Endothelial cell of umbilical vein (primary cell): ENCODE measurements at regions of chr2 and their contacts with region 1.

Region 1: DNA sequence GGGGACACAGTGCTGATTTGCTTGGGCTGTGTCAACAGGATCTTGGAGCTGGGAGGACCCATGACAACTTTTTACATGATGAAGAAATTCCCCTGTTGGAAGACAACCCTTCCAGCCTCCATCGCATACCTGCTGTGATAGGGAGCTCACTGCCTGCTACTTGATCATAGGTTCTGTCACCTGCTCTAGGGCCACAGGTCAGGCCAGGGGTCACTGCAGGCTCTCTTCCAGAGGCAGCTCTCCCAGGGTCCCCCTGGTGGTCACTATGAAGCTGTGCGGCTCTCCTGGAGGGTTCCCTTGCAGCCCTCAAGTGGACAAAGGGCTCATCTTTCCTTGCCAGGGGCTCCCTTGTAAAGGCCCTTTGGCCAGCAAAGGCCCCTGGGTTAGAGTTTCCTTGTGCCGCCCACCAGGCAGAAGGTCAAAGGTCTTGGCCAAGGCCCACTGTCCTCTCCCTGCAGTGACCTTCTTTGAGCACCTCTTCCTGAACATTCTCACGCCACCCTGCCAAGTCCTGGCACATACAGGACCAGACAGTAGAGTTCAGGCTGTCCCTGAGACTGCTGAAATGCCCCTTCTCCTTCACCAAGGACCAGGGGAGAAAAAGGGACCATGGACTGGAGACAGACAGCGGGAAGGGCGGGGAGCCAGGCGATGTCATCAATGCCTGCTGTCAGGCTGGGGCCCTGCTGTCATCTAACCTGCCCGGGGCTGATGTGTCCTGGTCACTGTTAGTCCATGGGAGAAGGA is 345.1 kb downstream of the DYSF start:
- DNase-seq: peak; percentile 39
- H3K4me3 ChIP-seq: no peak overlapping the region
- H3K27ac ChIP-seq: no peak overlapping the region
- H3K4me1 ChIP-seq: no peaks in the 10 kb centered on the region
- H3K27me3 ChIP-seq: peaks cover 4 to 6% of the 10 kb centered on the region in 2 experiments
- CTCF ChIP-seq: peak; percentile 78 to 88
- POLR2A ChIP-seq: no peak

Region 2: DNA sequence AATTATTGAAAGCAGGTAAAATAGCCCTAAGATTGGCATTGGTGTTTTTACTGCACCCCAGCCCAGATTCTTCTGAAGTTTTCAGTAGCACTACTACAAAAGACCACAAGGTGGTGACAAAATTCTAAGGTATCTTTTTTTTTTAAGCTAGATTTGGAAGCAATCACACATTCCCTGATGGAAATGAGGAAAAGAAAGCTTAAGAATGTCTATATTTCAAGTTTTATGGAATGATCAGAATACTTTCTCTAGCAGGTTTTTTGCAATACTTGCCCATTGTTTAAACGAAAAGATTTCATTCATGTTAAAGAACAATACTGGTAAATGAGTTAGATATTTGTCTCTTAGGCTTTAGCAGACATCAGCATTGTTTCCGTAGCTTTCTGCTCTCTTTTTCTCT is 498.9 kb before region 1 on chr2:
- CTCF ChIA-PET with region 1: interaction called, 34 read pairs
- POLR2A ChIA-PET with region 1: no interaction called
- dilution Hi-C with region 1: no loop called
- intact Hi-C with region 1: loop called (anchors 2 kb)
- DNase-seq: peak; percentile 63
- H3K4me3 ChIP-seq: no peak overlapping the region
- H3K27ac ChIP-seq: no peak overlapping the region
- H3K4me1 ChIP-seq: no peaks in the 10 kb centered on the region
- H3K27me3 ChIP-seq: no peaks in the 10 kb centered on the region
- CTCF ChIP-seq: peak; percentile 31 to 38
- POLR2A ChIP-seq: no peak

Region 3: GRCh38 chr2:71609958-71610357 is 188.5 kb before region 1 on chr2:
- CTCF ChIA-PET with region 1: interaction called, 52 read pairs
- POLR2A ChIA-PET with region 1: no interaction called
- dilution Hi-C with region 1: no loop called
- intact Hi-C with region 1: loop called (anchors 1 kb)
- DNase-seq: peak; percentile 42
- H3K4me3 ChIP-seq: no peak overlapping the region
- H3K27ac ChIP-seq: peak overlapping the region; percentile 59
- H3K4me1 ChIP-seq: peaks cover 32% of the 10 kb centered on the region
- H3K27me3 ChIP-seq: no peaks in the 10 kb centered on the region
- CTCF ChIP-seq: peak in 1 of 2 donors; percentile 27
- POLR2A ChIP-seq: no peak

Region 4: GRCh38 chr2:71742953-71743601 is 55.4 kb before region 1 on chr2:
- CTCF ChIA-PET with region 1: interaction called, 11 read pairs
- POLR2A ChIA-PET with region 1: no interaction called
- dilution Hi-C with region 1: no loop called
- intact Hi-C with region 1: no loop called
- DNase-seq: peak; percentile 96
- H3K4me3 ChIP-seq: no peak overlapping the region
- H3K27ac ChIP-seq: peak overlapping the region; percentile 72
- H3K4me1 ChIP-seq: peaks cover 40% of the 10 kb centered on the region
- H3K27me3 ChIP-seq: peaks cover 0 to 2% of the 10 kb centered on the region in 2 experiments
- CTCF ChIP-seq: no peak
- POLR2A ChIP-seq: no peak

Region 5: GRCh38 chr2:71826826-71827523 is 28.5 kb after region 1 on chr2:
- CTCF ChIA-PET with region 1: interaction called, 10 read pairs
- POLR2A ChIA-PET with region 1: no interaction called
- dilution Hi-C with region 1: no loop called
- intact Hi-C with region 1: no loop called
- DNase-seq: no peak
- H3K4me3 ChIP-seq: no peak overlapping the region
- H3K27ac ChIP-seq: no peak overlapping the region
- H3K4me1 ChIP-seq: no peaks in the 10 kb centered on the region
- H3K27me3 ChIP-seq: peaks cover 10 to 29% of the 10 kb centered on the region in 2 experiments
- CTCF ChIP-seq: no peak
- POLR2A ChIP-seq: no peak

Region 6: DNA sequence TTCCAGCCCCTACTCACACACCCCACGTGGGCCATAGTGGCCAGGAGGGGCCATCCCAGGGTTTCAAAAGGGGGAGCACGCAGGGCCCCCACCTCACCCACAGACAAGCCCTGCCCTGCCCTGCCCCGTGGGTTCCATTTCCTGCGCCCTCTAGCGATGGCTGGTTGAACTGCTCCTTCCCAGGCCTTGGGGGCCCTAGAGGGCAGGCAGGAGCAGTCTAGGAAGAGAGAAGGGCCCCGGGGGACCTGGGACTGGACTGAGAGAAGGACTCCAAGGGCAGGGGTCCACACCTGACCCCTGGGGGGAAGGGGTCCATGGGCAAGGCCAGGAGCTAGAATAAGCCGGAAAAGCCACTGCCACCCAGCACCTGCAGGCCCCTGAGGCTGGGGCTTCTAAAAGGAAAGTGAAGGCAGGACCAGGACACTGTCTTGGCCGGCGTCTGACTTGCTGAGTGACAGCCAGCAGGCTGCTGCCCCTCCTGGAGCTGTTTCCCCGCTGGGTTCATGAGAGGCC is 339.1 kb after region 1 on chr2:
- CTCF ChIA-PET with region 1: interaction called, 3 read pairs
- POLR2A ChIA-PET with region 1: no interaction called
- dilution Hi-C with region 1: no loop called
- intact Hi-C with region 1: loop called (anchors 1 kb)
- DNase-seq: peak; percentile 49
- H3K4me3 ChIP-seq: no peak overlapping the region
- H3K27ac ChIP-seq: no peak overlapping the region
- H3K4me1 ChIP-seq: no peaks in the 10 kb centered on the region
- H3K27me3 ChIP-seq: peaks cover 2% of the 10 kb centered on the region in 2 experiments
- CTCF ChIP-seq: peak; percentile 88 to 94
- POLR2A ChIP-seq: no peak